ENCODE measurements at regions of chr11 and their contacts with region 1.

Region 1: DNA sequence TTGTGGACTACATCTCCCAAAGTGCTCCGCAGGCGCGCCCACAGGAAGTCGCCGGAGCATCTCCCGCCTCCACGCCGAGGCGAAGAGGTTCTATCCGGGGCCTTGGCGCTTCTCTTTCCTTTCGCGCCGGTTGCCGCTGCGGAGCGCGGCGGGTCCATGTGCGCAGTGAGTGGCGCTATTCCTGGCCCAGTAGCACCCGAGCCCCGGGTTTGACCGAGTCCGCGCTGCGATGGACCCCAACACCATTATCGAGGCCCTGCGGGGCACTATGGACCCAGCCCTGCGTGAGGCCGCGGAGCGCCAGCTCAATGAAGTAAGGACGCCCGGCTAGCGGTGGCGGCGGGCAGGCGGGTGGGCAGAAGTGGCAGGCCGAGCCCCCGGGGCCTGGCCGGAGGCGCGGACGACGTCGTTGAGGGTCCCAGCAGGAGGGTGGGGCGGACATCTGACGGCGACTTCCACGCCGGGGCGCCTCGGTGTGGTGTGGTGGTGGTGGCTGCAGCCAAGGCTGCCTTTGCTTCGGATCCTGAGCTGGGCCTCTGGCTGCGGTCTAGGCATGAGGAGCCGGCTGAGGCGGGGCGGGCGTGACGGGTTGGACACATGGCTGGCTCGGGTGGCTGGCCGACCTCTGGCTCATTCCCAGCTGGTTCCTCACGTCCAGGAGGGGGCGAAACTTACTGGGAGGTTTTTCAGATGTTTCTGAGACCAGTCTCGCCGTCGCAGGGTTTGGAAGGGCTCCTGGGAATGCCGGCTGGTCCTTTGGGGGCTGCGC is at the start of gene IPO7:
- DNase-seq: peak; percentile 90
- ATAC-seq: peak; percentile 97
- H3K4me3 ChIP-seq: peak within 1 kb of the TSS; percentile 36 to 93 (median 90)
- H3K4me3 Mint-ChIP-seq: peak within 1 kb of the TSS; percentile 96
- H3K27ac ChIP-seq: peak within 1 kb of the TSS; percentile 78 to 90
- H3K27ac Mint-ChIP-seq: peak within 1 kb of the TSS; percentile 95
- H3K4me1 ChIP-seq: peaks cover 15 to 22% of the 10 kb centered on the region in 2 donors
- H3K4me1 Mint-ChIP-seq: peaks cover 26% of the 10 kb centered on the region
- H3K27me3 ChIP-seq: no peaks in the 10 kb centered on the region
- H3K27me3 Mint-ChIP-seq: no peaks in the 10 kb centered on the region
- CTCF ChIP-seq: no peak
- total RNA-seq, gene IPO7: 53.2 and 77.9 TPM in 2 replicates

Region 2: DNA sequence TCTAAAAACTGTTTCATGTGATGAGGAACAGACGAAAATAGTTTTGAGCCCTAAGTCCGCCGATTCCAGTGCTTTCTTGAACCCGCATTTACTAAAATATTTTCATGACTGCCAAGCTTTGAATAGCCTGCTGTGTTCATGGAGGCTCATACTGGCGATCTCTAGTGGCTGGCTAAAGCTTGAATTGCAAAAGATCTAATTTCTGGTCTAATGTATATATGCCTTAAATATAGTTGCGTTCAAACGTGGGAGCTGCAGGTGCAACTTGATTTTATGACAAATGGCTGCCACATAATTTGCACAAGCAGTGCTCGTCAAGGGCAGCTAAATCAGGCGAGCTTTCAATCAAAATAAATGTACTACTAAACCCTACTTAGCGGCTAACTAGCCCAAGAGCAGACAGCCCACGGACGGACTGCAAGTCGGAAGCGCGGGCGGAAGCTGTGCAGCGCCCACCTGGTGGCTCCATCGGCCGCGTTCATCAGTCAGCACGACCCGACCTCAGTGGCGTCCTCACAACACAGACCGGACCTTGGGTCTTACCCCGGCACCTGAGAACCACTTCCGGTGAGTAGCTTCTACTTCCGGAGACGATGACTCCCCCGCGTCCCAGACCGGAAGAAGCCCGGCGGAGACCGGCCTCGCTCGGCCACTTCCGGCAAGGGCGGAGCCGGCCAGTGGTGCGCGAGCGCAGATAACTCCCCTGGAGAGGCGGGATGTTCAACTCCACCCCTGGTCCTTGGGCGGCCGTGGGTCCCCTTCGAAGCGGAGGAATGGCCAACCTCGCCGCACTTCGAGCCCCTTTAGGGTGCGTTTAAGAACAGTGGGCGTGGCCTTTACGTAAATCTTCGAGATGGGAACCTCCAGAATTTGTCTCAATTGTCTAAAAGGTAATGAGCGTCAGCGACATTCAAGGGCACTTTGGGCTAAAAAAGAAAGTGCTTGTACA is 696.0 kb before region 1 on chr11:
- CTCF ChIA-PET with region 1: no interaction called
- POLR2A ChIA-PET with region 1: no interaction called
- intact Hi-C with region 1: loop called (anchors 10 kb)
- DNase-seq: peak; percentile 91
- ATAC-seq: peak; percentile 93
- H3K4me3 ChIP-seq: peak overlapping the region; percentile 56 to 90 (median 77)
- H3K4me3 Mint-ChIP-seq: peak overlapping the region; percentile 98
- H3K27ac ChIP-seq: peak overlapping the region; percentile 83
- H3K27ac Mint-ChIP-seq: peak overlapping the region; percentile 98
- H3K4me1 ChIP-seq: peaks cover 26 to 30% of the 10 kb centered on the region in 2 donors
- H3K4me1 Mint-ChIP-seq: peaks cover 47% of the 10 kb centered on the region
- H3K27me3 ChIP-seq: no peaks in the 10 kb centered on the region
- H3K27me3 Mint-ChIP-seq: no peaks in the 10 kb centered on the region
- CTCF ChIP-seq: no peak

Region 3: DNA sequence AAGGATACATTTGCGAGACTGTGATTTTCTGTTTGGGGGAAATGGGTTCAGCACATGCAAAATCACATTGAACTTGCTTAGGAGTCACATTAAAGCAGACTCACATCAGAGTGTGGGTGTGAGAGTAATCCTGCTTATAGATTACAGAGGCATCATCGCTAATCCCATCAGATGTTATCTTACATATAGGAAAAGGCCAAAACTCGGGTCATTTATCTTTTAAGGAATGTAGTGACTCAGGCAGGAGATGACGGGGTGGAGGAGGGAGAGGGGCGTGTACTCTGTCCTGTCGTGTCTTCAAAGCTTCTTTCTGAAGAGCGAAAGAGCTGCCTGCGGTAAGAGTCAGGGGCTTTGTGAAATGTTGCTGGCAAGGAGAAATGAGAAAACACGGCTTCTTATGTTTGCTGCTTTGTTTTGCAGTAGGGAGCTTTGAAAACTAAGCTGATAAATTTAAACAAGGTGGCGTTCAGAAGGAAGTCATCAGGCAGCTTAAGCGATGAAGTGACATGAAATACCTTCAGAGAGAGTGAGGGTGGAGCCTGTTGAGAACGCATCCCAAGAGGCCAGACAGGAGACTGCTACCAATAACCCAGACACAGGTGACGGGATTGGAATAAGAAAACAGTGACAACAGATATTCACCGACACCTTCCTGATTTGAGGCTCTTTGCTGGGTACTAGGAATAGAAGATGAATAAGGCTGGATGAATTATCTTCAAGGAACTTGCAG is 449.8 kb before region 1 on chr11:
- CTCF ChIA-PET with region 1: no interaction called
- POLR2A ChIA-PET with region 1: no interaction called
- intact Hi-C with region 1: no loop called
- DNase-seq: no peak
- ATAC-seq: no peak
- H3K4me3 ChIP-seq: no peak overlapping the region
- H3K4me3 Mint-ChIP-seq: no peak overlapping the region
- H3K27ac ChIP-seq: no peak overlapping the region
- H3K27ac Mint-ChIP-seq: no peak overlapping the region
- H3K4me1 ChIP-seq: no peaks in the 10 kb centered on the region
- H3K4me1 Mint-ChIP-seq: peaks cover 3% of the 10 kb centered on the region
- H3K27me3 ChIP-seq: no peaks in the 10 kb centered on the region
- H3K27me3 Mint-ChIP-seq: peaks cover 4% of the 10 kb centered on the region
- CTCF ChIP-seq: no peak

Region 4: DNA sequence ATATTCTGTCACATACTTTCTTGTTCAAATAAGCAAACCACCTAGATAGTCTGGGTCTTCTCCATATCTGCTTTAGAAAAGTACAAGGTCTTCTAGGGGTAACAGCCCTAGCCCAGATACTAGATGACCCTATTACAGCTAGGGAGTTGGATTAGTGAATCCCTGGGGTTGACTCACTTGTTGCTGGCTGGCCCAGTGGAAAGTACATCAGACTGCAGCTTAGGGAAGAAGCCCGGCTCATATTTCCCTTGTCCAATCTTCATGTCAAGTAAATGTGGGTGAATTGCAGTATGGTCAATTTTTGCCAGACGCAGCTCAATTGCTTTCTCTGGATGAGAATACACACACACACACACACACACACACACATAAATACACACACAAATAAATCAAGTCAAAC is 214.3 kb before region 1 on chr11:
- CTCF ChIA-PET with region 1: no interaction called
- POLR2A ChIA-PET with region 1: no interaction called
- intact Hi-C with region 1: loop called (anchors 5 kb)
- DNase-seq: no peak
- ATAC-seq: no peak
- H3K4me3 ChIP-seq: no peak overlapping the region
- H3K4me3 Mint-ChIP-seq: no peak overlapping the region
- H3K27ac ChIP-seq: no peak overlapping the region
- H3K27ac Mint-ChIP-seq: no peak overlapping the region
- H3K4me1 ChIP-seq: no peaks in the 10 kb centered on the region
- H3K4me1 Mint-ChIP-seq: no peaks in the 10 kb centered on the region
- H3K27me3 ChIP-seq: no peaks in the 10 kb centered on the region
- H3K27me3 Mint-ChIP-seq: no peaks in the 10 kb centered on the region
- CTCF ChIP-seq: no peak

Region 5: DNA sequence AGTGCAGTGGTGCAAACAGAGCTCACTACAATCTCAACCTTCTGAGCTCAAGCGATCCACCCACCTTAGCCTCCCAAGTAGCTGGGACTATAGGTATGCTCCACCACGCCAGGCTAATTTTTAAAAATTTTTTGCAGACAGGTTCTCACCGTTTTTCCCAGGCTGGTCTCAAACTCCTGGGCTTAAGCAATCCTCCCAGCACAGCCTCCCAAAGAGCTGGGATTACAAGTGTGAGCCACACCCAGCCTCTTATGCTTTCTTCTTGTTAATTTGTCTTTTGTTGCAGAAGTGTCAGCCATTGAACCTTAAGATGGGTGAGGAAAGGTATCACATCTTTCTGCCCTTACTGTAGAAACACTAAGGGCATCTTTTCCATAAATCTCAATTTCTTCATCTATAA is 154.4 kb before region 1 on chr11:
- CTCF ChIA-PET with region 1: no interaction called
- POLR2A ChIA-PET with region 1: interaction called, 14 read pairs
- intact Hi-C with region 1: no loop called
- DNase-seq: no peak
- ATAC-seq: no peak
- H3K4me3 ChIP-seq: no peak overlapping the region
- H3K4me3 Mint-ChIP-seq: peak overlapping the region; percentile 84
- H3K27ac ChIP-seq: no peak overlapping the region
- H3K27ac Mint-ChIP-seq: no peak overlapping the region
- H3K4me1 ChIP-seq: peaks cover 12 to 15% of the 10 kb centered on the region in 2 donors
- H3K4me1 Mint-ChIP-seq: peaks cover 32% of the 10 kb centered on the region
- H3K27me3 ChIP-seq: no peaks in the 10 kb centered on the region
- H3K27me3 Mint-ChIP-seq: no peaks in the 10 kb centered on the region
- CTCF ChIP-seq: no peak

Region 6: GRCh38 chr11:9265211-9266131 is 119.2 kb before region 1 on chr11 and contains the start of gene DENND5A:
- CTCF ChIA-PET with region 1: no interaction called
- POLR2A ChIA-PET with region 1: no interaction called
- intact Hi-C with region 1: loop called (anchors 5 kb)
- DNase-seq: peak; percentile 73
- ATAC-seq: peak; percentile 74
- H3K4me3 ChIP-seq: peak within 1 kb of the TSS; percentile 64 to 94 (median 91)
- H3K4me3 Mint-ChIP-seq: peak within 1 kb of the TSS; percentile 97
- H3K27ac ChIP-seq: peak within 1 kb of the TSS; percentile 62 to 84
- H3K27ac Mint-ChIP-seq: peak within 1 kb of the TSS; percentile 94
- H3K4me1 ChIP-seq: peaks cover 11 to 19% of the 10 kb centered on the region in 2 donors
- H3K4me1 Mint-ChIP-seq: peaks cover 34% of the 10 kb centered on the region
- H3K27me3 ChIP-seq: no peaks in the 10 kb centered on the region
- H3K27me3 Mint-ChIP-seq: no peaks in the 10 kb centered on the region
- CTCF ChIP-seq: no peak
- total RNA-seq, gene DENND5A: 41.3 and 41.6 TPM in 2 replicates

Region 7: GRCh38 chr11:9314291-9315036 is 70.3 kb before region 1 on chr11 and contains the start of gene TMEM41B:
- CTCF ChIA-PET with region 1: interaction called, 9 read pairs
- POLR2A ChIA-PET with region 1: interaction called, 4 read pairs
- intact Hi-C with region 1: loop called (anchors 1 kb)
- DNase-seq: peak; percentile 98
- ATAC-seq: peak; percentile 97
- H3K4me3 ChIP-seq: peak within 1 kb of the TSS; percentile 81 to 94 (median 86)
- H3K4me3 Mint-ChIP-seq: peak within 1 kb of the TSS; percentile 100
- H3K27ac ChIP-seq: peak within 1 kb of the TSS; percentile 82 to 92
- H3K27ac Mint-ChIP-seq: peak within 1 kb of the TSS; percentile 99
- H3K4me1 ChIP-seq: peaks cover 14 to 17% of the 10 kb centered on the region in 2 donors
- H3K4me1 Mint-ChIP-seq: peaks cover 43% of the 10 kb centered on the region
- H3K27me3 ChIP-seq: no peaks in the 10 kb centered on the region
- H3K27me3 Mint-ChIP-seq: peaks cover 1% of the 10 kb centered on the region
- CTCF ChIP-seq: no peak
- total RNA-seq, gene TMEM41B: 38.5 and 43.9 TPM in 2 replicates

Region 8: DNA sequence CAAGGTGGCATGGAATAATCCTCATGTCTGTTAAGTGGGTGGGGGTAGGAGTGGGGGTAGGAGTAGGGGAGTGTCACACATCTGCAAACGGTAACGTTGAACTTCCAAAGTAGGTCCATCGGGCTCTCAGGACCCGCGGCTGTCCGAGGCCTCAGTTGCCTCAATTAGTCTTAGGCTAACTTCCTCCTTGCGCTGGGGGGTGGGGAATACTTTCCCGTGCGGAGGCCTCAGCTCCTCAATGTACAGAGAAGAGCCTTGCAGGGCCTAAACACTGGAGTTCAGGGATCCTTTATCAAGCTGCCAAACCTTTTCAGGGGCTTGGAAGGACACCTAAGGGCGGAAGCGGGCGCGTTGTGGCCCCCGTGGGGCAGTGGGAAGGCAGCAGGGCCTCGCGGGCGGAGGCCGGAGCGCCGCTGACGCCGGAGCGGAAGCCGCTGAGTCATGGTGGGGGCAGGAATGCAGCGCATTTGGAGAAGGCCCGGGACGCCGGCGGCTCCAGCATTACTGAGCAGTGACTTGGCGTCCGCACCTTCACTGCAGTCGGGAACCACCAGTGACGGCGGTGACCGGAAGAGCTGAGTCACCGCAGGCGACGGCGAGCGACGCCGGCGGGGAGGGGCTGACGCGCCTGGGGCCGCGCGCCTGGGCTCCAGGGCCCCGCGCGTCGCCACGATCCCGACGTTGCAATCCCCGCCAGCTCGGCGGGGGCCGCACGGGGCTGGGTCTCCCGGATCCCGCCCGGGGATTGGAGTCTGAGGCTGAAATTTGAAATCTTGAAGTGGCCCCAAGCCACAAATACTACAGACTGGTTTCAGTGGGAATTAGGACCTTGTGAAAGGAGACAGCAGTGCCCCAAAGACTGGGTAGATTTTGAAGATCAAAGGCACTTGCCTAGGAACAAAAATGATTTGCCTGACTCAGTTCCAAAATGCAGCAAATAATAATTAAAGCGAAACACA is 20.5 kb before region 1 on chr11:
- CTCF ChIA-PET with region 1: interaction called, 4 read pairs
- POLR2A ChIA-PET with region 1: interaction called, 3 read pairs
- intact Hi-C with region 1: loop called (anchors 1 kb)
- DNase-seq: peak; percentile 83
- ATAC-seq: peak; percentile 95
- H3K4me3 ChIP-seq: peak overlapping the region; percentile 63 to 84 (median 74)
- H3K4me3 Mint-ChIP-seq: peak overlapping the region; percentile 89
- H3K27ac ChIP-seq: peak overlapping the region; percentile 69 to 73
- H3K27ac Mint-ChIP-seq: peak overlapping the region; percentile 87
- H3K4me1 ChIP-seq: peaks cover 0 to 9% of the 10 kb centered on the region in 2 donors
- H3K4me1 Mint-ChIP-seq: peaks cover 9% of the 10 kb centered on the region
- H3K27me3 ChIP-seq: no peaks in the 10 kb centered on the region
- H3K27me3 Mint-ChIP-seq: no peaks in the 10 kb centered on the region
- CTCF ChIP-seq: no peak

Measured in B cell (primary cell).